ENCODE measurements at regions of chr7 and their contacts with region 1.

Region 1: GRCh38 chr7:41051535-41051934 is 651.4 kb downstream of the INHBA start:
- DNase-seq: no peak
- H3K4me3 ChIP-seq: no peak overlapping the region
- H3K27ac ChIP-seq: no peak overlapping the region
- H3K4me1 ChIP-seq: peaks cover 0 to 3% (median 0%) of the 10 kb centered on the region in 4 donors
- H3K27me3 ChIP-seq: no peaks in the 10 kb centered on the region
- CTCF ChIP-seq: no peak
- EP300 ChIP-seq: no peak
- POLR2A ChIP-seq: no peak

Region 2: GRCh38 chr7:41069635-41070034 is 18.1 kb after region 1 on chr7:
- in situ Hi-C with region 1: no loop called
- intact Hi-C with region 1: loop called (anchors 1 kb)
- DNase-seq: no peak
- H3K4me3 ChIP-seq: no peak overlapping the region
- H3K27ac ChIP-seq: no peak overlapping the region
- H3K4me1 ChIP-seq: no peaks in the 10 kb centered on the region
- H3K27me3 ChIP-seq: no peaks in the 10 kb centered on the region
- CTCF ChIP-seq: no peak
- EP300 ChIP-seq: no peak
- POLR2A ChIP-seq: no peak

Measured in transverse colon (tissue), 4 donors.